Gastrocnemius medialis (tissue), 4 donors: ENCODE measurements at regions of chr1 and their contacts with region 1.

Region 1: GRCh38 chr1:44799770-44800584 is at the start of gene PLK3:
- DNase-seq: peak; percentile 97
- ATAC-seq: peak; percentile 94
- H3K4me3 ChIP-seq: peak within 1 kb of the TSS; percentile 71 to 81 (median 76)
- H3K27ac ChIP-seq: peak within 1 kb of the TSS; percentile 91 to 99 (median 95)
- H3K4me1 ChIP-seq: peaks cover 16 to 32% of the 10 kb centered on the region in 2 donors
- H3K27me3 ChIP-seq: no peaks in the 10 kb centered on the region
- CTCF ChIP-seq: peak; percentile 87 to 96 (median 94)
- POLR2A ChIP-seq: peak; percentile 95 to 98
- total RNA-seq, gene PLK3: 1.6 to 4.3 (median 3.6) TPM

Region 2: DNA sequence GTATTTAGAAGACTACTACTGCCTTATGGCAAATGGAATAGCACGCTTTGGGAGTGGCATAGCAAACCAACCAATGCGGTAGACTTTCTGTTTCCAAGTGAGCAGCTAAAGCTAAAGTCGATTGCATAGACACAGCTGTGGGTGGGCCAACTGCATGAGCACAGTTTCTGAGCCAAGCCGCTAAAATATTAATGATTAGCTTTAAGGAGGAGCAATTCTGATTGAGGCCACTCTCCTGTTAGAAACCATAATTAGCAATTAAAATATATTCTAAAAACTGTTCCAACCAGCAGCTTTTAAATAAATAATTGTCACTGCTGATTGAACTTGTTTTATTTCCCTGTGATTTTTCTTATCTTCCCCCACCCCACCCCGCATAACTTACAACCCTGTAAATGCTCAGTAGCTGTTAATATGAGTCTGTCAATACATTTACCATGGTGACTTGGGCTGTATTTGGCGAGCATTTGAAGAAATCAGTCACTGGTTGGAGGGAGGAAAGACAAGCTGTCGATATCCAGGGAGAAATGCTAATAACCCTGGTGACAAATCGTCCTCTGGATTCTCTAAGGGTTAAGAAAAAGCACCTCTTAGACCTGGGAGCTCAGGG is 362.8 kb before region 1 on chr1:
- in situ Hi-C with region 1: no loop called
- intact Hi-C with region 1: no loop called
- DNase-seq: no peak
- ATAC-seq: no peak
- H3K4me3 ChIP-seq: no peak overlapping the region
- H3K27ac ChIP-seq: no peak overlapping the region
- H3K4me1 ChIP-seq: no peaks in the 10 kb centered on the region
- H3K27me3 ChIP-seq: no peaks in the 10 kb centered on the region
- CTCF ChIP-seq: no peak
- POLR2A ChIP-seq: no peak

Region 3: GRCh38 chr1:44707112-44707881 is 92.7 kb before region 1 on chr1:
- in situ Hi-C with region 1: no loop called
- intact Hi-C with region 1: no loop called
- DNase-seq: no peak
- ATAC-seq: no peak
- H3K4me3 ChIP-seq: no peak overlapping the region
- H3K27ac ChIP-seq: no peak overlapping the region
- H3K4me1 ChIP-seq: peaks cover 0 to 4% of the 10 kb centered on the region in 2 donors
- H3K27me3 ChIP-seq: no peaks in the 10 kb centered on the region
- CTCF ChIP-seq: no peak
- POLR2A ChIP-seq: no peak

Region 4: GRCh38 chr1:44819608-44820327 is 19.8 kb after region 1 on chr1:
- in situ Hi-C with region 1: no loop called
- intact Hi-C with region 1: loop called (anchors 2 kb)
- DNase-seq: peak; percentile 66 to 85
- ATAC-seq: peak; percentile 83 to 89
- H3K4me3 ChIP-seq: peak overlapping the region; percentile 46 to 70 (median 64)
- H3K27ac ChIP-seq: peak overlapping the region; percentile 86 to 91 (median 89)
- H3K4me1 ChIP-seq: peaks cover 6 to 13% of the 10 kb centered on the region in 2 donors
- H3K27me3 ChIP-seq: no peaks in the 10 kb centered on the region
- CTCF ChIP-seq: no peak
- POLR2A ChIP-seq: peak; percentile 92 to 94

Region 5: GRCh38 chr1:44985747-44986359 is 185.9 kb after region 1 on chr1:
- in situ Hi-C with region 1: loop called in 1 of 4 experiments (anchors 25 kb)
- intact Hi-C with region 1: no loop called
- DNase-seq: no peak
- ATAC-seq: peak; percentile 83 to 86
- H3K4me3 ChIP-seq: peak overlapping the region; percentile 64 to 85 (median 81)
- H3K27ac ChIP-seq: peak overlapping the region; percentile 81 to 96 (median 88)
- H3K4me1 ChIP-seq: peaks cover 24 to 28% of the 10 kb centered on the region in 2 donors
- H3K27me3 ChIP-seq: no peaks in the 10 kb centered on the region
- CTCF ChIP-seq: no peak
- POLR2A ChIP-seq: no peak

Region 6: DNA sequence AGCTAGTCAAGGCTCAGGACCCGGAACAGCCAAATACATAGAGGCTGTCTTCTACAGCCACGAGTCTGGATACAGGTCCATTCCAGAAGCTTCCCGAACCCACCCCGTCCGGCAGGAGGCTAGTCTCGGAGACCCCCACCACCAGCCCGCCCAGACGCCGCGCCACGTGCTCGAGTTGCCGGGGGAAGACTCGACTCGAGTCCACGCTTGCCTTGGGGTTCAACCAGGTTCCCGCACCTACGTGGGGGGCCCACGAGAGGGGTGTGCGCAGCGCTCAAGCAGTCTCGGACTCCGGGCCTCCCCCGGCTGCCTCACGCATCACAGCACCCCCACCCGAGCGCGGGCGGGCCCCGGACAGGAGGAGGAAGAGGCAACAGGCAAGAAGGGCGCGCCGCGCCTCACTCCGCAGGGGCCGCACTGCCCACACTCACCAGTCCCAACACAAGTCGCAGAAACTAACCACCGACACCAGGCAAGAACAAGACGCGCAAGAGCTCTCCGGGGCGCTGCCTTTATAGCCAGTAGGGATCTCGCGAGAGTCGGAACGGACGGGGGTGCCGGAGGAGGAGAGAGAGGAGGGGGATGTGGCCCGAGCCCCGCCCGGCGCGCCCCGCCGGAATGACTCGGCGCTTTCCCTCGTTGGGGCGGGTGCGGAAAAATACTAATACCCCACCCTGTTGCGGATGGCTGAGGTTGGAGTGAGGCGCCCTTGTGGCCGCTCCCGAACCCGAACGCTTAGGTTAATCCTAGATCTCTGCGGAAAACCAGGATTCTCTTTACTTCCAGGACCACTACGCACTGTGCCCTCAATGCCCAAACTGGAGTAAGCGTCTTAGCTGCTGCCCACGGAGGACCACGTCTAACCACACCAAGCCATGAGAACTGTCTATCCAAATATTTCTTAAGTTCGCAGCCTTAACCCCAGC is 721.7 kb after region 1 on chr1 and contains the start of gene PRDX1:
- in situ Hi-C with region 1: loop called in 1 of 4 experiments (anchors 25 kb)
- intact Hi-C with region 1: no loop called
- DNase-seq: peak; percentile 95
- ATAC-seq: peak; percentile 97 to 98
- H3K4me3 ChIP-seq: peak within 1 kb of the TSS; percentile 86 to 99 (median 96)
- H3K27ac ChIP-seq: peak within 1 kb of the TSS; percentile 89 to 98 (median 94)
- H3K4me1 ChIP-seq: peaks cover 15 to 18% of the 10 kb centered on the region in 2 donors
- H3K27me3 ChIP-seq: no peaks in the 10 kb centered on the region
- CTCF ChIP-seq: peak in 2 of 5 experiments; percentile 21 to 23
- POLR2A ChIP-seq: peak; percentile 99
- total RNA-seq, gene PRDX1: 406 to 554 (median 482) TPM